ENCODE measurements at regions of chr1 and their contacts with region 1.

Region 1: DNA sequence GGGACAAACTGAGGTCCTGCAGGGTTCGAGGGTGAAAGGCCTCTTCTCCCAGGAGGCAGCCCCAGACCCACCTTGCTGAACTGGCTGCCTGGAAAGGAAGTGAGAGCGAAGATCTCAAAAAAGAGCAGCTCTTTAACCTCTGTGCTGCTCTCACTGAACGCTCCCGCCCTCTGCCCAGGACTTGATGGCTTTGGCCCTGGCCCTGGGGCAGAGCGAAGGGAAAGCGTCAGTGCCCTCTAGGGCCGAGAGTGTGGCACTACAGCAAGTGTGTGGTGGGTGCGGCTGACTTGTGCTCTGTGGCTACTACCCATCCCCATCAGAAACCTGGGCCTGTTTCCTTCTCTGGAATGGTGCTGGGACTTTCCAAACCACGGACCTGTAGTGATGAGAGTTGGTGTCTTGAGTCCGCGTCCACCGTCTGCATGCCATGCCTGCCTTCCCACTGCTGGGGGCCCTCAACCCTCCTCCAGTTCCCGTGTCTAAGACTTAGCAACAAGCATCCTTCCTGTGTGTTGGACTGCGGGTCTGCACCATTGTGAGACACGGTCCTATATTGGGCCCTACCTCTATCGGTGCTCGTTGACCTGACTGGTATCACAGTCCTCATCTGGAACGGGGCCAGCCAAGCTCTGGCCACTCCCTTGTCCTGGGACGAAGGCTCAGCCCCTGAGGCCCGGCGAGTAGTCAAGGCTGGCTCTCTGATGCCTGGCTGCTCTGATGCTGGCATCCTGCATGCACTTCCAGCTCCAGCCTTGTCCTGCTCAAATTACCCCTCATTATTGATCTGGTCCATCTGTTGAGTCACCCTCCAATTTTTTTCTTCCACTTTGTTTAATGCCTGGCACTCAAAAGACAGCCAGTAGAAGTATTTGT is 180.3 kb downstream of the DISC1 start:
- H3K4me3 ChIP-seq: no peak overlapping the region
- H3K27ac ChIP-seq: no peak overlapping the region
- H3K4me1 ChIP-seq: no peaks in the 10 kb centered on the region
- CTCF ChIP-seq: peak; percentile 69; the same call in 1 of the 2 replicates

Region 2: GRCh38 chr1:231724876-231725724 is 81.8 kb before region 1 on chr1:
- CTCF ChIA-PET with region 1: interaction called, 24 read pairs
- POLR2A ChIA-PET with region 1: no interaction called
- H3K4me3 ChIP-seq: no peak overlapping the region
- H3K27ac ChIP-seq: no peak overlapping the region
- H3K4me1 ChIP-seq: no peaks in the 10 kb centered on the region
- CTCF ChIP-seq: peak; percentile 31; the same call in 1 of the 2 replicates

Region 3: DNA sequence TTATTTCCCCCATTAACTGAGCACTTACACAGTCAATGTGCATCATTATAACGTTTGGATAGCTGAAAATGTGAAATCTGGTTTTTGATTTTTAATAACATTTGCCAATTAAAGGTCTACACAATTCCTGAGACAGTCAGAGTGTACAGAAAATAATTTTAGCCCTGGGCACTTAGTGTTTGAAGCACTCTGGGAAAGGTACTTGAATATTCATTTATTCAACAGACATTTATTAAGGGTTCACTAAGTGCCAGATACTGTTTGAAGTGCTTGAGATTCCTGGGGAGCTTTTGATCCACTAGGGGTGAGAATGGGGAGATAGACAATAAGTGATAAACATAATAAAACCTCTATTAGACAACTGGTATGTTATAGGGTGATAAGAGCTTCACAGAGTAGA is 38.4 kb before region 1 on chr1:
- CTCF ChIA-PET with region 1: interaction called, 13 read pairs
- POLR2A ChIA-PET with region 1: no interaction called
- H3K4me3 ChIP-seq: no peak overlapping the region
- H3K27ac ChIP-seq: no peak overlapping the region
- H3K4me1 ChIP-seq: no peaks in the 10 kb centered on the region
- CTCF ChIP-seq: no peak

Region 4: DNA sequence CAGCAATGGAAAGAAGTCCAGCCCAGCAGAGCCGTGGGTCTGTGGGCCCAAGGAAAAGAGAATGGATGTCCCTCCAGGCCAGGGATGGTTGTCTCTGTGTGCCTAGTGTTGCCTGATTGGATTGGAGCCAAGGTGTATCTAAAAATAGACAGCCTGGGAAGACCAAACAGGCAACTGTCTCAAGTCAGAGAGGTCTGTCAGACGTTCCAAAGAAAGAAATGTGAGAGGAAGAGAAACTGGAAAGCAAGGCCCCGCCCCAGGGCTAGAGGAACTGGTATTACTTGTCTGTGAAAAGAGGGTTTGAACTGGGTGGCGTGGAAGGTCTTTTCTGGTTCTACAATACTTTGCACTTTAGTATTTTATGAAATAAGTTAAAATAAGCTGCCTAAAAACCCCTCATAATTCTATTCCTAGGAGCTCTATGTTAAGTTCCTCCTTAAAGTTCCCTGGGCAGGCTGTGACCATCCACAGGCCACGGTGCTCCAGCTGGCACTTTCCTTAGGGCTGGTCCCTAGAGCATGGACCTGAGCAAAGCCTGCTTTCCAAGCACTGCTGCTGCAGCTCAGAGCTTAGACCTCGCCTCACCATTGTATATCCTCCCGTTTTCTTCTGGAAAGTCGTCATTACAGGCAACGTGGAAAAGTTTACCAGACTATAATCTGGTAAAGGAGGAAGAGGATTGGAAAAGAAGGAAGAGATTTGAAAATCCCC is 28.7 kb before region 1 on chr1:
- CTCF ChIA-PET with region 1: interaction called, 14 read pairs
- POLR2A ChIA-PET with region 1: interaction called, 3 read pairs
- H3K4me3 ChIP-seq: no peak overlapping the region
- H3K27ac ChIP-seq: no peak overlapping the region
- H3K4me1 ChIP-seq: peaks cover 8% of the 10 kb centered on the region
- CTCF ChIP-seq: no peak

Region 5: GRCh38 chr1:231818337-231818736 is 11.5 kb after region 1 on chr1:
- CTCF ChIA-PET with region 1: interaction called, 27 read pairs
- POLR2A ChIA-PET with region 1: no interaction called
- H3K4me3 ChIP-seq: no peak overlapping the region
- H3K27ac ChIP-seq: no peak overlapping the region
- H3K4me1 ChIP-seq: no peaks in the 10 kb centered on the region
- CTCF ChIP-seq: no peak

Region 6: GRCh38 chr1:231838521-231838920 is 31.7 kb after region 1 on chr1:
- CTCF ChIA-PET with region 1: no interaction called
- POLR2A ChIA-PET with region 1: no interaction called
- H3K4me3 ChIP-seq: no peak overlapping the region
- H3K27ac ChIP-seq: no peak overlapping the region
- H3K4me1 ChIP-seq: no peaks in the 10 kb centered on the region
- CTCF ChIP-seq: no peak

Region 7: DNA sequence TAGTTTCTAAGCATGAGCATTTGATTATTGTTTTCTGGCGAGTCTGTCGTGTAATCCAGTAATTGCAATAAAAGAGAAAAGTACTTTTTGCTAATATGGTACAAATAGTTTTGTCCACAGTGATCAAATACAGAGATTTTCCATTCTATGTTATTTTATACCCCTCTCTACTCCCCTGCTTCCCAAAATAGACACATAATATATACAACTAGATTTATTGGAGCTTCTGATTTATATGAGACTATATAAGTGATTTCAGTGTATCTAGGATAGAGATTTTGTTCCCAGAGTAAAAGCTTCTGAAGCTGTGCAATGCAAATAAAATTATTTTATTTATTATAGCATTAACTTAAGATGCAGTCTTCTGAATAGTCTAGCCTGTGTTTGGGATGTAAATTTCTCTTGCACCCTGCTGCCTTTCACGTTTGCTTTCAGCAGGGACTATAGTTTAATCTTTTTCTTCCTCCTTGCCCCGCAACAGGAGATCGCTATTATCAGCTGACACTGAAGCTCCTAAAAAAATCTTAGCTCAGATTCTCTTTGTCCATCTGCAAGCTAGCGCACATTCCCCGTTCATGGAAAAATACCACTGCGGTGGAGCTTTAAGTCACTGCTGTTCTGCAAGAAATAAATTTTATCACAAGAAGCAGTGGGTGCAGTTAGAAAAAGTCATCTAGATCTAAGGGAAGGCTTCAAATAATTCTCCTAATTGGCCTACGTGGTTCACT is 93.0 kb after region 1 on chr1:
- CTCF ChIA-PET with region 1: no interaction called
- POLR2A ChIA-PET with region 1: no interaction called
- H3K4me3 ChIP-seq: no peak overlapping the region
- H3K27ac ChIP-seq: no peak overlapping the region
- H3K4me1 ChIP-seq: 0 out of 2 replicates have a peak, but pooled peaks cover 2% of the 10 kb centered on the region
- CTCF ChIP-seq: no peak